Endothelial cell of umbilical vein (primary cell): ENCODE measurements at regions of chr15 and their contacts with region 1.

Region 1: GRCh38 chr15:35444557-35445204 is 101.3 kb downstream of the DPH6 start:
- DNase-seq: peak; percentile 72
- H3K4me3 ChIP-seq: no peak overlapping the region
- H3K27ac ChIP-seq: no peak overlapping the region
- H3K4me1 ChIP-seq: peaks cover 4% of the 10 kb centered on the region
- H3K27me3 ChIP-seq: peaks cover 0 to 2% of the 10 kb centered on the region in 2 experiments
- CTCF ChIP-seq: peak; percentile 59 to 68
- POLR2A ChIP-seq: no peak

Region 2: DNA sequence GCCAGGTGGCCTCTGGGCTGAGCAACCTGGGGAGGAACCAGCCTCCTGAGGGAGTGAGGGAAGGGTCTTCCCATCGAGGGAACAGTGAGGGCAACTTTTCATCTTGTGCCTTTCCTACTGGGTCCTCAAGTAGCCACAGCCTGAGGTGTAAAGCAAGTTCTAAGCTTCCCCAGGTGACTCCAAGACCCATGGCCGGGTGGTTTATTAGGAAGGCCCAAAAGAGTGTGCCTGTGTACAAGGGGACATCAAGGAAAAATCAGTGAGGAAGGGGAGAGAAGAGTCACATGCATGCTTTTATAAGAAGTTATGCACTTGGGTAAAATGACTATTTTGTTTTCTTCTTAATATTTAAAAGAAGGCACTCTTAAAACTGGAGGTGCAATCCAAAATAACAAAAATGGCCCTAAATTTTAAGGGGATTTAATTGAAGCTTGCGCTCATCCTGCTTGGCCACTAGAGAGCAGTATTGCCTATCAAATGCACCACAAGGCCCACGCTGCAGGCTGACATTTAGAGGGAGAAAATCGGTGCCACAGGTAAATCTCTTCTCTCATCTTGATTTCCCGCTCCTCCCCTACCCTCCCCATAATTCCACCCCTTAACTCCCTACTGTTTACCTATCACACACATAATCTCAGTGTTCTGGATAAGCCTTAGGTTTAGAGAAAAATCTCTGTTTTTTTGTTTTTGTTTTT is 366.3 kb before region 1 on chr15:
- CTCF ChIA-PET with region 1: interaction called, 138 read pairs
- POLR2A ChIA-PET with region 1: no interaction called
- dilution Hi-C with region 1: no loop called
- intact Hi-C with region 1: loop called (anchors 1 kb)
- DNase-seq: peak; percentile 54
- H3K4me3 ChIP-seq: no peak overlapping the region
- H3K27ac ChIP-seq: no peak overlapping the region
- H3K4me1 ChIP-seq: no peaks in the 10 kb centered on the region
- H3K27me3 ChIP-seq: peaks cover 3 to 4% of the 10 kb centered on the region in 2 experiments
- CTCF ChIP-seq: peak; percentile 72 to 73
- POLR2A ChIP-seq: no peak

Region 3: DNA sequence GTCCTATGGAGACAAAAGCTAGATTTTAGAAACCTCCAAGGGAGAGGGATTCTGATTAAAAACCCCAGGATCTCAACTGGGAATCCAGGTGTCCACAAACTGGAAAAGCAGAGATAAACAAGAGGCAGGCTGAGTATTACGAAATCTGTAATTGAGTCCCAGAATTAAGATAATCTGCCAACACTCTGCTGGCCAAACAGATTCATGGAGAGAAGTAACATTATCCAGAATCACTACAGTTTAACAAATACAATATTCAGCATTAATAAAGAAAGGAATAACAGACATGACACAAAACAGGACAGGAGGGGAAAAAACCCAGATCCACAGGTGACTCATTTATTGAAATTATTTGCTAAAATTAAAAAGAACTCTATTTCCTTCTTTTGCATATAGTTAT is 132.3 kb before region 1 on chr15:
- CTCF ChIA-PET with region 1: interaction called, 82 read pairs
- POLR2A ChIA-PET with region 1: no interaction called
- dilution Hi-C with region 1: no loop called
- intact Hi-C with region 1: loop called (anchors 5 kb)
- DNase-seq: no peak
- H3K4me3 ChIP-seq: no peak overlapping the region
- H3K27ac ChIP-seq: no peak overlapping the region
- H3K4me1 ChIP-seq: peaks cover 30% of the 10 kb centered on the region
- H3K27me3 ChIP-seq: no peaks in the 10 kb centered on the region
- CTCF ChIP-seq: no peak
- POLR2A ChIP-seq: no peak

Region 4: GRCh38 chr15:35427091-35427490 is 17.6 kb before region 1 on chr15:
- CTCF ChIA-PET with region 1: interaction called, 56 read pairs
- POLR2A ChIA-PET with region 1: no interaction called
- dilution Hi-C with region 1: no loop called
- intact Hi-C with region 1: no loop called
- DNase-seq: peak; percentile 90
- H3K4me3 ChIP-seq: no peak overlapping the region
- H3K27ac ChIP-seq: no peak overlapping the region
- H3K4me1 ChIP-seq: peaks cover 13% of the 10 kb centered on the region
- H3K27me3 ChIP-seq: no peaks in the 10 kb centered on the region
- CTCF ChIP-seq: no peak
- POLR2A ChIP-seq: no peak

Region 5: DNA sequence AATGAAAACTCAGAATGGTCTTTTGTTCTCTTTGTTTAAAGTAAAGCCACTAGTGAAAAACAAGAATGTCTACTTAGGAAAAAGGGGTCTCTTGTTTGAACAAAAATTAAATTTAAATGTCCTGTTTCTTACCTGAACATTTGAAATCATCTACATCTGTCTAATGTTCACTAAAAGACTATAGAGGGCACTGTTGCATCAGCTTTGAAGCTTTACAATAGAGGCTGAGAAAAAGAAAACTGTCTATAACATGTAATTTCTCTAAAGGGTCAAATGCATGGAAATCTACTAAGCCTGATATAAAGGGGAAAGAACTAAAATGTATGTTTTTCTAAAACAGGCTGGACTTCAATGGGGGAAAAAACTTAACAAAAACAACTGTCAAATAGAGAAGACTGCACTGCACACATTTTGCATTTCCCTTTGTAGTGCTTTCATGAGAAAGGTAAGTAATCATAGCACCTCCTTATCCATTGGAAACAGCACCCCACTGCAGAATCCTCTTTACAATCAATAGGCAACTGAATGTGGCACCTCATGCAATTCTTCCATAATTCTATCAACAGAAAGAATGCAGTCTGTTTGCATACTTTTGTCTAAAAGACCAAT is 75.0 kb after region 1 on chr15:
- CTCF ChIA-PET with region 1: interaction called, 12 read pairs
- POLR2A ChIA-PET with region 1: no interaction called
- dilution Hi-C with region 1: no loop called
- intact Hi-C with region 1: no loop called
- DNase-seq: peak; percentile 77
- H3K4me3 ChIP-seq: no peak overlapping the region
- H3K27ac ChIP-seq: no peak overlapping the region
- H3K4me1 ChIP-seq: peaks cover 18% of the 10 kb centered on the region
- H3K27me3 ChIP-seq: no peaks in the 10 kb centered on the region
- CTCF ChIP-seq: peak; percentile 38 to 39
- POLR2A ChIP-seq: no peak

Region 6: GRCh38 chr15:35674873-35675781 is 230.4 kb after region 1 on chr15:
- CTCF ChIA-PET with region 1: no interaction called
- POLR2A ChIA-PET with region 1: no interaction called
- dilution Hi-C with region 1: no loop called
- intact Hi-C with region 1: no loop called
- DNase-seq: peak; percentile 62
- H3K4me3 ChIP-seq: no peak overlapping the region
- H3K27ac ChIP-seq: no peak overlapping the region
- H3K4me1 ChIP-seq: peaks cover 46% of the 10 kb centered on the region
- H3K27me3 ChIP-seq: no peaks in the 10 kb centered on the region
- CTCF ChIP-seq: no peak
- POLR2A ChIP-seq: no peak